MCF 10A (cell line): ENCODE measurements at regions of chr22 and their contacts with region 1.

Region 1: GRCh38 chr22:43151251-43152002 is at the start of gene TSPO:
- DNase-seq: peak; percentile 40
- H3K4me3 Mint-ChIP-seq: peak within 1 kb of the TSS; percentile 74
- H3K27ac Mint-ChIP-seq: peak within 1 kb of the TSS; percentile 1
- H3K4me1 Mint-ChIP-seq: peaks cover 10% of the 10 kb centered on the region
- H3K27me3 Mint-ChIP-seq: no peaks in the 10 kb centered on the region
- CTCF ChIP-seq: no peak
- total RNA-seq, gene TSPO: 294 and 308 TPM in 2 replicates

Region 2: GRCh38 chr22:43110444-43110926 is 40.9 kb before region 1 on chr22 and contains the start of gene BIK:
- CTCF ChIA-PET with region 1: no interaction called
- POLR2A ChIA-PET with region 1: no interaction called
- intact Hi-C with region 1: loop called (anchors 5 kb)
- DNase-seq: peak; percentile 59
- H3K4me3 Mint-ChIP-seq: peak within 1 kb of the TSS; percentile 69
- H3K27ac Mint-ChIP-seq: no peak within 1 kb of the TSS
- H3K4me1 Mint-ChIP-seq: no peaks in the 10 kb centered on the region
- H3K27me3 Mint-ChIP-seq: no peaks in the 10 kb centered on the region
- CTCF ChIP-seq: no peak
- total RNA-seq, gene BIK: 7.3 and 10.0 TPM in 2 replicates

Region 3: DNA sequence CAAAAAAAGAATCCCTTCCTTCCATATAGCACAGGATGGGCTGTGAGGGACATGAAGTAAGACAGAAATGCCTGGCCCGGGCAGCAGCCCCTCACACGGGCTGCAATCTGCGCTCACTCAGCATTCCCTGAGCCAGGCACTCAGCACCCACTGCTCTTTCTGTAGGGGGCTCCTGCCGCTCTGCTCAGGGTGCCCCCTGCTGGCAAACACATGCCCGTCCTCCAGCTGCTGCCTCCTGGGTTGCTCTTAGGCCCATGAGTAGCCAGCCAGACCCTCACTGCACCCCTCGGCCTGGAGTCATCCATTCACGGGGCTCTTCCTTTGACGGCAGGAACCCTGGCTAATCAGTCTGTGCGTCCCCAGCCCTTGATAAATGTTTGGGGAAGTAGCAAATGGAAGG is 15.2 kb before region 1 on chr22:
- CTCF ChIA-PET with region 1: no interaction called
- POLR2A ChIA-PET with region 1: no interaction called
- intact Hi-C with region 1: no loop called
- DNase-seq: peak; percentile 44
- H3K4me3 Mint-ChIP-seq: no peak overlapping the region
- H3K27ac Mint-ChIP-seq: no peak overlapping the region
- H3K4me1 Mint-ChIP-seq: no peaks in the 10 kb centered on the region
- H3K27me3 Mint-ChIP-seq: no peaks in the 10 kb centered on the region
- CTCF ChIP-seq: peak; percentile 54

Region 4: DNA sequence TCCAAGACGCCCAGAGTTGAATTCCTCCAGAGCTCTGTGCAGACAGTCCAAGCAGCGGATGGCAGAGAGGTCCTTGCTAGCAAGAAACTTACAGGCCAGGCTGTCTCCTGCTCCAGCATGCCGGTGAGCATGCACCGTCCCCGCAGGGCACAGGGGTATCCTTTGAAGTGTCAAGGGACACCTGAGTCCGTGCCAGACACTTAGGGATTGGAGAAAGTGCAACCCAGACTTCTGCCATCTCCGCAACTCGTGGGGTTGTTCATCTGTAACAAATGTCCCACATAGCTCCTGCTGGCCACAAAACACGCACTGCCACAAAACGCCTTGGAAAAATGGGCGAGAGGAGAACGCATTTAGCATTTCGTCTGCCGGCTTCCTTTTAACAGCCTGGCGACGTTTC is 13.2 kb after region 1 on chr22:
- CTCF ChIA-PET with region 1: interaction called, 3 read pairs
- POLR2A ChIA-PET with region 1: interaction called, 19 read pairs
- intact Hi-C with region 1: no loop called
- DNase-seq: no peak
- H3K4me3 Mint-ChIP-seq: no peak overlapping the region
- H3K27ac Mint-ChIP-seq: no peak overlapping the region
- H3K4me1 Mint-ChIP-seq: peaks cover 11% of the 10 kb centered on the region
- H3K27me3 Mint-ChIP-seq: no peaks in the 10 kb centered on the region
- CTCF ChIP-seq: no peak

Region 5: GRCh38 chr22:43187171-43188099 is 36.0 kb after region 1 on chr22:
- CTCF ChIA-PET with region 1: no interaction called
- POLR2A ChIA-PET with region 1: interaction called, 23 read pairs
- intact Hi-C with region 1: no loop called
- DNase-seq: peak; percentile 93
- H3K4me3 Mint-ChIP-seq: peak overlapping the region; percentile 80
- H3K27ac Mint-ChIP-seq: peak overlapping the region; percentile 96
- H3K4me1 Mint-ChIP-seq: peaks cover 14% of the 10 kb centered on the region
- H3K27me3 Mint-ChIP-seq: no peaks in the 10 kb centered on the region
- CTCF ChIP-seq: peak; percentile 56

Region 6: DNA sequence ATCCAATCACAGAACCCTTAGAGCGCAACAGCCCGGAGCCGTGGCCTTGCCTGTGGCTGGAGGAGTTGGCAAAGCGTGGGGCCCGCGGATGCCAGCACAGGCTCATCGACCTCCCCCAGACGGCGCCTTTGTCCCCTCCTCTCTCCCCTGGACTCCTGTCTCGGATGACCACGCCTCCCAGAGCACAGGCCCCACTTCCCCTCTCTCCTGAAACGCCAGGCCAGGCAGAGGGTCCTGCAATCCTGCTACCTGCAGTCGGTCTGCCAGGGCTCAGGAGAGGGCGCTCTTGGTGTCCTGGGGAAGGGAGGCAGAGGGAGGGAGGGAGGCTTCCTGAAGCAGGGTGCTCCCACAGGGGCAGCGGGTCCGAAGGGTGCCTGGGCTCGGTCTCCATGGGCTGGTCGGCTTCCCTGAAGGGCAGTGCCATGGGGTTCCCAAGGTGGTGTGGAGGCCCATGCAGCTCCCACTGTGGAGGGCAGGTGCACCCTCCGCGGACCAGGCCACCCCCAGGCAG is 52.1 kb after region 1 on chr22:
- CTCF ChIA-PET with region 1: no interaction called
- POLR2A ChIA-PET with region 1: no interaction called
- intact Hi-C with region 1: no loop called
- DNase-seq: no peak
- H3K4me3 Mint-ChIP-seq: no peak overlapping the region
- H3K27ac Mint-ChIP-seq: no peak overlapping the region
- H3K4me1 Mint-ChIP-seq: peaks cover 6% of the 10 kb centered on the region
- H3K27me3 Mint-ChIP-seq: no peaks in the 10 kb centered on the region
- CTCF ChIP-seq: no peak